ENCODE measurements at regions of chr1 and their contacts with region 1.

Region 1: DNA sequence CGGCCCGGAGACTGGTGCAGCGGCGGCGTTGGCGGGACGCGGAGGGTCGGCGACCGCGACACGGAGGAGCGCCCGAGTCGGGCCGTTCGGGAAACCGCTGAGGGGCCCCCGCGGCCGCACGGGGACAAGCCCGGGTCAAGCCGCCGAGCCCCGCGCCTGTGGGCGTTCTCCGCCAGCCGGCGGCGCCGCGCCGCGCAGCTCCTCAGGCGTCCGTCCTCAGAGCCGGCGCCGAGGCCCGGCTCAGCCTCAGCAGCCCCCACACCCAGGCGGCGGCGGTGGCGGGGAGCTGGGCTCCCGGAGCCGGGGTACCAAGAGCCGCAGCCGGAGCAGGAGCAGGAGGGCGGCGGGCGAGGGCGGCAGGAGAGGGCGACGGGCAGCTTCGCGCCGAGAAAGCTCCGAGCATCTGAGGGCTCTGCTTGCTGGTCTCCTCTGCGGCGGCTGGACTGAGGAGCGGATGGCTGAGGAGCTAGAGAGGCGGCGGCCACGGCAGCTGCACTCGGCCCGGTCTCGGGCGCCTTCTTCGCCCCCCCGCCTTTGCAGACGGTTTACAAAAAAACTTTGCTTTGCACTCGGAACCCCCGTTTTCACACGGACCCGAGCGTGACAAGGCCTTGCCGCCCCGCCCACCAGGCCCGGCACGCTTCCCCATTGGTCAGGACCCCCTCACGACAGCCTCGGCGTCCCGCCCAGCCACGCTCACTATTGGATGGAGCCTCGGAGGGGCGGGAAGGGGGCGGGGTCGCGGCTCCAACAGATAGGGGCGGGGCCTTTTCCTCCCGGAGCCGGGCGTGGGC is at the start of gene SLC30A1:
- DNase-seq: peak; percentile 98 to 100 (median 99)
- ATAC-seq: peak; percentile 92
- H3K4me3 ChIP-seq: peak within 1 kb of the TSS; percentile 84 to 93
- H3K4me3 Mint-ChIP-seq: peak within 1 kb of the TSS; percentile 93
- H3K27ac ChIP-seq: peak within 1 kb of the TSS; percentile 56 to 59
- H3K27ac Mint-ChIP-seq: peak within 1 kb of the TSS; percentile 95
- H3K4me1 ChIP-seq: peaks cover 33% of the 10 kb centered on the region
- H3K4me1 Mint-ChIP-seq: peaks cover 51% of the 10 kb centered on the region
- H3K27me3 ChIP-seq: no peaks in the 10 kb centered on the region
- H3K27me3 Mint-ChIP-seq: no peaks in the 10 kb centered on the region
- CTCF ChIP-seq: no peak
- total RNA-seq, gene SLC30A1: 9.7 to 9.8 TPM

Region 2: GRCh38 chr1:211258756-211259637 is 319.8 kb before region 1 on chr1 and contains the start of gene RCOR3:
- CTCF ChIA-PET with region 1: no interaction called
- POLR2A ChIA-PET with region 1: interaction called, 3 read pairs
- intact Hi-C with region 1: loop called (anchors 2 to 5 kb)
- DNase-seq: peak; percentile 81 to 96 (median 91)
- ATAC-seq: peak; percentile 76
- H3K4me3 ChIP-seq: peak within 1 kb of the TSS; percentile 74 to 88
- H3K4me3 Mint-ChIP-seq: peak within 1 kb of the TSS; percentile 95
- H3K27ac ChIP-seq: peak within 1 kb of the TSS; percentile 80 to 84
- H3K27ac Mint-ChIP-seq: peak within 1 kb of the TSS; percentile 94
- H3K4me1 ChIP-seq: peaks cover 16% of the 10 kb centered on the region
- H3K4me1 Mint-ChIP-seq: peaks cover 18% of the 10 kb centered on the region
- H3K27me3 ChIP-seq: no peaks in the 10 kb centered on the region
- H3K27me3 Mint-ChIP-seq: no peaks in the 10 kb centered on the region
- CTCF ChIP-seq: peak; percentile 40
- total RNA-seq, gene RCOR3: 54.6 to 61.1 TPM

Region 3: DNA sequence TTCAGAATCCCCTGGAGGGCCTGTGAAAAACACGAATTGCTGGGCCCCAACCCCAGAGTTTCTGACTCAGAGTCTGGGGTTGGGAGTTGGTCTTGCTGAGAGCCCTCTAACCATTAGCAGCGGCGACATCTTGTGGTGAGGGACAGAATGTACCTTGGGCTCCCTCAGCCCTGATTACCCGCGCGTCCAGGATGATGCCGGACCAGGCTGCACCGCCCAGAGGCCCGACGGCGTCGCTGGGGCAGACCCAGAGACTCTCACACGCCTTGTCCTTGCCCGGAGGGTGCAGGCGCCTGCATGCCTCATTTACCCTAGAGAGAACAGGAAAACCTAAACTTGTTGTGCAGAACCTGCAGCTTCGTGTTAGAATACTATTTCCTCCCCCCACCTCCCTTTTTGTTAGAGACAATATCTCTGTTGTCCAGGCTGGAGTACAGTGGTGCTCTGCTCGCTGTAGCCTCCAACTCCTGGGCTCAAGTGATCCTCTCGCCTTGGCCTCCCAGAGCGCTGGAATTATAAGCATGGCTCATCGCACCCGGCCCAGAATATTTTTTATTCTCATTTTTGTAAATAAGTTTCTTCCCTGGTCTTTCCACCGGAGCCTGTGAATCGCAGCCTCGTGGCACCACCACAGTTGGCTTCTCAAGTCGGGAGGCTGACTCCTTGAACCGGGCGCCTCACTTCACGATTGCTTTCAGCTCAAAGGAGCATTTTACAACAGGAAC is 64.6 kb before region 1 on chr1:
- CTCF ChIA-PET with region 1: interaction called, 5 read pairs
- POLR2A ChIA-PET with region 1: no interaction called
- intact Hi-C with region 1: loop called (anchors 2 to 5 kb)
- DNase-seq: peak; percentile 26 to 79 (median 67)
- ATAC-seq: peak; percentile 65
- H3K4me3 ChIP-seq: no peak overlapping the region
- H3K4me3 Mint-ChIP-seq: peak overlapping the region; percentile 69
- H3K27ac ChIP-seq: no peak overlapping the region
- H3K27ac Mint-ChIP-seq: no peak overlapping the region
- H3K4me1 ChIP-seq: peaks cover 20% of the 10 kb centered on the region
- H3K4me1 Mint-ChIP-seq: peaks cover 17% of the 10 kb centered on the region
- H3K27me3 ChIP-seq: peaks cover 0 to 2% of the 10 kb centered on the region in 2 experiments
- H3K27me3 Mint-ChIP-seq: no peaks in the 10 kb centered on the region
- CTCF ChIP-seq: no peak

Region 4: DNA sequence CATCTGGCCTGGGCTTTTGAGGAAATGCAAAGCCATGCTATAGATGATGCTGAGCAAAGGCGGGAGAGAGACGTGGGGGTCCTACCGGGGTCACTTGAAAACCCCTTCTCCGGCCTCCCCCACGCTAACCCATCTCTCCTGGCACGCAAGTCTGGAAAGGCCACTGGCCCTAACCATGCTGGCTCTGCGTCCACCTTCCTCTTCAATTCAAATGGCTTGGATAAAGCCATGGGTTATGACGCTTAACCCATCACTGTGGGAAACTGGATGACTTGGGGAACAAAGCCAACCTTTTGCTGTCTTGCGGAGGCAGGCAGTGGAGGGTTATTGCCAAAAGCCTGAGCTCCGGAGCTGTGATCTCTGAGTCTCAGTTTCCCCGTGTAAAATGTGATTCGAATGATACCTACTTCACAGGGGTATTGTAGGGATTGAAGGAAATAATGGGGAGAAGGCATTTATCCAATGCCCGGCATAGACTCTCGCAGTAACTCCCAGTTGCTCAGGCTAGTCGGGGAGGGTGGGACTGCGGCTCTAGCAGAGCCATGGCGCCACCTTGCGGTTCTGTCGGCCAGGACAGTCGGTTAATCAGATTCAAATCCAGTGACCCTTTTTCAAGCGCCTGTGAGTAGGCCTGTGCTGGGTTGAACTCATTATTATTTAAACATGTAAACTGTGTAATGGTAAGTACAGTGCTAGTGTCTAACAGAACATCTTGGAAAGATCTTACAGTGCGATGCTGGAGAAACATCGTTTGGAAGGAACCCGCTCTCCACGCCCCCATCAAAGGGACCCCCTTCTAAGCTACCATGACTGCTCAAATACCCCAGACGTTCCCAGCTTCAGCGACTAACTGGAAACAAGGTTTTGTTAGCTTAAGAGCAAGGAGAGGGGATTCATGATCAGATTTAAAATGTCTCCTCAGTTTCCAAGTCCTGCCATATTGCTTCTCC is 76.3 kb after region 1 on chr1:
- CTCF ChIA-PET with region 1: interaction called, 8 read pairs
- POLR2A ChIA-PET with region 1: no interaction called
- intact Hi-C with region 1: loop called (anchors 1 kb)
- DNase-seq: peak; percentile 63 to 86 (median 83)
- ATAC-seq: peak; percentile 95
- H3K4me3 ChIP-seq: no peak overlapping the region
- H3K4me3 Mint-ChIP-seq: no peak overlapping the region
- H3K27ac ChIP-seq: no peak overlapping the region
- H3K27ac Mint-ChIP-seq: no peak overlapping the region
- H3K4me1 ChIP-seq: no peaks in the 10 kb centered on the region
- H3K4me1 Mint-ChIP-seq: no peaks in the 10 kb centered on the region
- H3K27me3 ChIP-seq: no peaks in the 10 kb centered on the region
- H3K27me3 Mint-ChIP-seq: peaks cover 2% of the 10 kb centered on the region
- CTCF ChIP-seq: peak; percentile 86

Region 5: GRCh38 chr1:212284744-212285684 is 706.2 kb after region 1 on chr1 and contains the start of gene PPP2R5A:
- CTCF ChIA-PET with region 1: no interaction called
- POLR2A ChIA-PET with region 1: interaction called, 3 read pairs
- intact Hi-C with region 1: loop called (anchors 1 to 10 kb)
- DNase-seq: peak; percentile 96 to 100 (median 98)
- ATAC-seq: peak; percentile 85
- H3K4me3 ChIP-seq: peak within 1 kb of the TSS; percentile 89 to 95
- H3K4me3 Mint-ChIP-seq: peak within 1 kb of the TSS; percentile 96
- H3K27ac ChIP-seq: peak within 1 kb of the TSS; percentile 95 to 96
- H3K27ac Mint-ChIP-seq: peak within 1 kb of the TSS; percentile 99
- H3K4me1 ChIP-seq: peaks cover 32% of the 10 kb centered on the region
- H3K4me1 Mint-ChIP-seq: peaks cover 43% of the 10 kb centered on the region
- H3K27me3 ChIP-seq: no peaks in the 10 kb centered on the region
- H3K27me3 Mint-ChIP-seq: no peaks in the 10 kb centered on the region
- CTCF ChIP-seq: no peak
- total RNA-seq, gene PPP2R5A: 57.8 to 60.5 TPM

Region 6: DNA sequence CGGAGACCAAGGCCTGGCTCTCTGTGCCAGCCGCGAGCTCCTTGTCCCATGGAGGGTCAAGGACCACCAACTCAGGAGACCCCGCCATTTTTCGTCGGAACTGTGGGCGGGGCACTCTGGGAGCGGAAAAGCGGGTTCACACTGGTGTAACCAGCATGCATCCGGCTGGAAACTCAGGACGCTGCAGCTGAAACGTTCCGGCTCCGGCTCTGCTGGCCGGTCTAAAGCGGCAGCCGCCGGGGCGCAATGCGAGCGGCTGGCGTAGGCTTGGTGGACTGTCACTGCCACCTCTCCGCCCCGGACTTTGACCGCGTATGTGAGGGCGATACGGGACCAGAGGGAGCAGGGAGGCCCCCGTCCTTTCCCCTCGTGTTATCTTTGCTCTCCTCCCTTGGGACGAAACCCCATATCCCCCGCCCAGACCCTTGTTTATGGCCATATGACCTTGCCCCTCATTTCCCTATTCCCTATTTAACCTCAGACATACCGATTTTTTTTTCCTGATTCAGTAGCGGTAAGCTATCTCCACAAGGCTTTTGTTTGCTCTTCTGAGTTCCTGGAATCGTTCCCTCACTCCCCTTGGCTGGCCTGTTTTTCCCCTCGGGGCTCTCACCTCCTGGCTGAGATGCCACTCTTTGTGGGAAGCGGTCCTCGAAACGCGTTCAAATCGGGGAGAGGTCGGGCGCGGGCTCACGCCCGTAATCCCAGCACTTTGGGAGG is 1213.0 kb after region 1 on chr1 and contains the starts of genes NSL1 and TATDN3:
- CTCF ChIA-PET with region 1: no interaction called
- POLR2A ChIA-PET with region 1: no interaction called
- intact Hi-C with region 1: loop called in 1 of 2 experiments (anchors 2 kb)
- DNase-seq: peak; percentile 87 to 98 (median 95)
- ATAC-seq: peak; percentile 93
- H3K4me3 ChIP-seq: peak within 1 kb of the TSS; percentile 93 to 96
- H3K4me3 Mint-ChIP-seq: peak within 1 kb of the TSS; percentile 97
- H3K27ac ChIP-seq: peak within 1 kb of the TSS; percentile 79 to 87
- H3K27ac Mint-ChIP-seq: peak within 1 kb of the TSS; percentile 96
- H3K4me1 ChIP-seq: peaks cover 22% of the 10 kb centered on the region
- H3K4me1 Mint-ChIP-seq: peaks cover 37% of the 10 kb centered on the region
- H3K27me3 ChIP-seq: no peaks in the 10 kb centered on the region
- H3K27me3 Mint-ChIP-seq: no peaks in the 10 kb centered on the region
- CTCF ChIP-seq: no peak
- total RNA-seq, gene NSL1: 13.0 to 19.0 TPM
- total RNA-seq, gene TATDN3: 10.7 to 11.6 TPM